Tibial artery (tissue), 4 donors: ENCODE measurements at regions of chr17 and their contacts with region 1.

Region 1: GRCh38 chr17:78970834-78971773 is 8.6 kb downstream of the LGALS3BP start:
- DNase-seq: peak; percentile 84 to 87
- H3K4me3 ChIP-seq: no peak overlapping the region
- H3K27ac ChIP-seq: peak overlapping the region; percentile 15 to 32
- H3K4me1 ChIP-seq: peaks cover 0 to 28% (median 20%) of the 10 kb centered on the region in 4 donors
- H3K27me3 ChIP-seq: no peaks in the 10 kb centered on the region
- CTCF ChIP-seq: peak; percentile 86 to 92

Region 2: GRCh38 chr17:78637643-78638420 is 333.3 kb before region 1 on chr17:
- intact Hi-C with region 1: no loop called
- DNase-seq: no peak
- H3K4me3 ChIP-seq: no peak overlapping the region
- H3K27ac ChIP-seq: no peak overlapping the region
- H3K4me1 ChIP-seq: peaks cover 0 to 10% (median 0%) of the 10 kb centered on the region in 4 donors
- H3K27me3 ChIP-seq: no peaks in the 10 kb centered on the region
- CTCF ChIP-seq: no peak

Region 3: GRCh38 chr17:78868391-78868790 is 102.7 kb before region 1 on chr17:
- intact Hi-C with region 1: loop called (anchors 2 kb)
- DNase-seq: no peak
- H3K4me3 ChIP-seq: no peak overlapping the region
- H3K27ac ChIP-seq: peak overlapping the region; percentile 43 to 54
- H3K4me1 ChIP-seq: peaks cover 0 to 56% (median 18%) of the 10 kb centered on the region in 4 donors
- H3K27me3 ChIP-seq: no peaks in the 10 kb centered on the region
- CTCF ChIP-seq: no peak

Region 4: GRCh38 chr17:78923660-78924453 is 47.2 kb before region 1 on chr17:
- intact Hi-C with region 1: loop called (anchors 5 kb)
- DNase-seq: peak; percentile 68 to 85
- H3K4me3 ChIP-seq: peak overlapping the region; percentile 89 to 91
- H3K27ac ChIP-seq: peak overlapping the region; percentile 96 to 98
- H3K4me1 ChIP-seq: peaks cover 0 to 68% (median 56%) of the 10 kb centered on the region in 4 donors
- H3K27me3 ChIP-seq: no peaks in the 10 kb centered on the region
- CTCF ChIP-seq: no peak

Region 5: DNA sequence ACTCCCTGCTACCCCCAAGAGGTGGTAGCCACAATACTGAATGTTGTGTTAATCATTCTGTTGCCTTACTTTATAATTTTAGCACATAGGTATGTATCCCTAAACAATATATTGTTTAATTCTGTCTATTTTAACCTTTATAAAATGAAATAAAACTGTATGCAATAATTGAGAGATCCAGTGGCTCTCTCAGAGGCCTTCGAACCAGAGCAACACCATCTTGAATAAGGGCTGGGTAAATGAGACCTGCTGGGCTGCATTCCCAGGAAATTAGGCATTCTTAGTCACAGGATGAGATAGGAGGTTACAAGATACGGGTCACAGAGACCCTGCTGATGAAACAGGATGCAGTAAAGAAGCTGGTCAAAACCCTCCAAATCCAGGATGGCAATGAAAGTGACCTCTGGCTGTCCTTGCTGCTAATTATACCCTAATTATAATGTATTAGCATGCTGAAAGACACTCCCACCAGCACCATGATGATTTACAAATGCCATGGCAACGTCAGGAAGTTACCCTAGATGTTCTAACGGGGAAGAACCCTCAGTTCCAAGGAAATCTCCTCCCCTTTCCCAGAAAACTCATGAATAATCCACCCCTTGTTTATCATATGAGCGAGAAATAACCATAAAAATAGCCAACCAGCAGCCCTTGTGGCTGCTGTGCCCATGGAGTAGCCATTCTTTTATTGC is 40.5 kb after region 1 on chr17:
- intact Hi-C with region 1: no loop called
- DNase-seq: no peak
- H3K4me3 ChIP-seq: no peak overlapping the region
- H3K27ac ChIP-seq: no peak overlapping the region
- H3K4me1 ChIP-seq: peaks cover 0 to 34% (median 26%) of the 10 kb centered on the region in 4 donors
- H3K27me3 ChIP-seq: no peaks in the 10 kb centered on the region
- CTCF ChIP-seq: no peak

Region 6: GRCh38 chr17:79027925-79028813 is 57.1 kb after region 1 on chr17:
- intact Hi-C with region 1: no loop called
- DNase-seq: peak; percentile 70 to 92
- H3K4me3 ChIP-seq: peak overlapping the region; percentile 85 to 91
- H3K27ac ChIP-seq: peak overlapping the region; percentile 96
- H3K4me1 ChIP-seq: peaks cover 0 to 80% (median 54%) of the 10 kb centered on the region in 4 donors
- H3K27me3 ChIP-seq: no peaks in the 10 kb centered on the region
- CTCF ChIP-seq: peak; percentile 5 to 26